GM13977 (cell line): ENCODE measurements at regions of chr5 and their contacts with region 1.

Region 1: DNA sequence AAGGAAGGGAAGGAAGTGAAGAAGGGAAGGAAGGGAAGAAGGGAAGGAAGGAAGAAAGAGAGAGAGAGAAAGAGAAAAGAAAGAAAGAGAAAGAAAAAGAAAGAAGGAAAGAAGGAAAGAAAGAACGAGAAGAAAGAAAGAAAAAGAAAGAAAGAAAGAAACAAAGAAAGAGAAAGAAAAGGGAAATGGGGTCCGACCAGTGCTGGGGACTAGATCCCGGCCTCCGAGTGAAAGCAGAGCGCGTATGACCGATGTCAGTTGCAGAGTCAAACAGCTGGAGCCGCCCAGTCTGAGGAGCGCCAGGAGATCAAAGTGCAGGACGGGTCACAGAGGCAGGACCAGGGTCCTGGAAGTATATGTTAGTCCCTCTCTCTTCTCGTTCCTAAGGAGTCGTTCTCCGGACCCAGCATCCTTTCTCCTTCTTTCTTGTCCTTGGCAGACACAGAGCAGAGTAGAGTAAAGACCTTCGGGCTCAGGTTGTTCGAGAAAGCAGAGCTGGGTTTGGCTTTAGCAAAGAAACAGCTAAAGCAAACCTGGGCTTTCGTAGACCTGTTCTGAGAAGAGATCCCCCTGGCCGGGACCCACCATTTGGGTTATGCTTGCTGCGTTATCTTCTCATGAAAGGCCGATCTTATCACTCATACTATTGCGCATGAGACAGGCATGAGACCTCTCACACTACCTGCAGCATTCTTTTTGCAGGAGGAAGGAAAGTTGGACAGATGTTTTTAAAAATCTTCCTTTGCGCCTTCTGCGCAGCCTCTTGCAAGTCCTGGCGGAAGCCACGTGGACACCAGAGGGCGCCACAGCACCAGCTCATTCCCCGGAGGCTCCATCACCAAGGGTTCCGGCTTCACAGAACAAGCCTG is 305.2 kb upstream of the MSX2 start:
- DNase-seq: peak; percentile 72
- CTCF ChIP-seq: peak; percentile 95

Region 2: DNA sequence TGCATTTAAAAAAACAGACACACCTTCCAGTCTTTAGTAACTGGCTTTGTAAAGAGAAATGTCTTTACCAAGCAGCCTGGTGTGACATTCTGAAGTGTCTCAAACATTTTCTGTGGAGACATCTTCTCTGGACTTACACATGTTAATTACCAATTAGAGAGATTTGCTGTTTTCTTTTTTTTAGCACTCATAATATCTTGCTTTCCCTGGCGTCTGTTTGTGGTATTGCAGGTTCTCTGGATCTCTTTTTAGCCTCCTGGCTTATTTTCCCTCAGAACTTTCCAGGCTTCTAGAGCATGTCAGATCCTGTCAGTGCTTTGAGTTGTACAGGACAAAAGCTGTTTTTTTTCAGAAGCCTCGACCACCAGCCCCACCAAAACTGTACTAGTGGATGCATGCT is 397.7 kb after region 1 on chr5:
- in situ Hi-C with region 1: loop called (anchors 25 kb)
- DNase-seq: no peak
- CTCF ChIP-seq: peak; percentile 16